ENCODE measurements at regions of chr6 and their contacts with region 1.

Region 1: DNA sequence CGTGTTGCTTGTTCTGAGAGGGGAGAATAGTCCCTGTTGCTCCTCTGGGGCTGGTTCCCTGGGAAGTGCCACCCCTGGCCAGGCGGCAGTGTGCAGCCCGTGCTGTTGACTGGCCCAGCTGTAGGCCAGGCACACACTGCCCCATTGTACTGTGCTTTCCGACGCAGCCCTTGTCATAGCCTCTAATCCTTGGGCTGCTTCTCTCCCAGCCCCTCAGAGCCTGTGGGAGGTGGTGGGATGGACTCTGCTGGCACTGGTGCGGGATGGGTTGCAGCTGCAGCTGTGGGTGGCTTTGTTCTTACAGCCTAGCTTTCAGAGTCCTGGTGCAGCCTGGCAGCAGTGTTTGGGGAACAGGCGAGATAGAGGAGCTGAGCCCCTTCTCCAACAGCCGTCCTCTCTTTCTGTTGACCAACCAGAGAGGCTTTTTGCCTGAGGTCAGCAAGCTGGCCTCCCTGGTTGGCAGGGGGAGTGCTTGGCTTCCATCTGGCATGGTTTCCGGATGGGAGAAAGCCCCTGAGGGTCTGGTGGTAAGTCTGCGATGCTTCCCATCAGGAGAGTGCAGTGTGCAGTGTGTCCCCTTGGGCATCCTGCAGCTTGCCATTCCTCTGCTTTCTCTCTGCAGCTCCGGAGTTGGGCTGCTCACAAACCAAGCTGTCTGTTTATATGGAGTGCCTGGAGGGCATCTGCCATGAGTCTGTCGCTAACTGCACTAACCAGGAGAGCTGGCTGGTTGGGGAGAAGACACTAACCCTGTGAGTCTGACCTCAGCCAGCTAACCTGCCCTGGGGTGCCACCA is 12.1 kb downstream of the TJAP1 start:
- DNase-seq: no peak
- CTCF ChIP-seq: no peak

Region 2: GRCh38 chr6:43477235-43478007 is 12.1 kb before region 1 on chr6 and contains the start of gene TJAP1:
- CTCF ChIA-PET with region 1: interaction called, 42 read pairs
- POLR2A ChIA-PET with region 1: no interaction called
- DNase-seq: peak; percentile 96
- CTCF ChIP-seq: no peak

Region 3: GRCh38 chr6:43621429-43622180 is 132.1 kb after region 1 on chr6:
- CTCF ChIA-PET with region 1: no interaction called
- POLR2A ChIA-PET with region 1: no interaction called
- DNase-seq: no peak
- CTCF ChIP-seq: no peak